Activated T-helper 2 cell treated with anti-CD3 and anti-CD28 coated beads, Interferon-gamma antibody, Interleukin-2, Interleukin-4, amounts not matched to agents 10 μg/mL and 5 μg/mL and 100 μg/mL, durations not matched to agents 14 hours and 24 hours and 36 hours (primary cell): ENCODE measurements at regions of chr6 and their contacts with region 1.

Region 1: DNA sequence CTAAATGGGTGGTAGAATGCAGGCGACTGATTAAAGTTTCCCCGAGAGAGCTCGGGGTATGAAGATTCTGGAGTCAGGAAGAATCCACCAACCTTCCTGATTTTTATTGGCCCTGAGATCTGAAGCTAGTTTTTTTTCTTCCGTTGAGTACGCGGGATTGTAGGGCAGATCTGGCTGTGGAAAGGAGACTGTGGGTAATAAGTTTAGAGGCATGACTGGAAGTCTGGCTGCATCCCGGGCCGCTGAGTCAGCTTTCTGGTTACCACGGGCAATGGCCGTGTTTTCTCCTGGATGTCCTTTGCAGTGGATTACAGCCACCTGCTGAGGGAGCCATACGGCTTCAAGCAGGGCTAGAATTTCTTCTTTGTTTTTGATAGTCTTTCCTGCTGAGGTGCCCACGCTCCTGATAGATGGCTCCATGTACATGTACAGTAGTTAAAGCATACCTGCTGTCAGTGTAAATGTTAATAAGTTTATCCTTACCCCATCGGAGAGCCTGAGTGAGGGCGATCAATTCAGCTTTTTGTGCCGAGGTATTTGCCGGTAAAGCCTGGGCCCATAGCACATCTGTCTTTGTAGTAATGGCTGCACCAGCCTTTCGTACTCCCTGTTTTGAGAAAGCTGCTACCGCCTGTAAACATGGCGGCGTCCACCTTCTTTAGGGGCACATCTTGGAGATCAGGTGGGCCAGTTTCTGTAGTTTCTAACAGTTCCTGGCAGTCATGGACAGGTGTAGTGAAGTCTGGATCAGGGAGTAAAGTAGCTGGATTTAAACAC is 154.0 kb downstream of the TRIM27 start:
- DNase-seq: no peak
- H3K4me3 Mint-ChIP-seq: no peak overlapping the region
- H3K27ac Mint-ChIP-seq: no peak overlapping the region
- H3K4me1 Mint-ChIP-seq: peaks cover 5% of the 10 kb centered on the region
- H3K27me3 Mint-ChIP-seq: peaks cover 92% of the 10 kb centered on the region

Region 2: DNA sequence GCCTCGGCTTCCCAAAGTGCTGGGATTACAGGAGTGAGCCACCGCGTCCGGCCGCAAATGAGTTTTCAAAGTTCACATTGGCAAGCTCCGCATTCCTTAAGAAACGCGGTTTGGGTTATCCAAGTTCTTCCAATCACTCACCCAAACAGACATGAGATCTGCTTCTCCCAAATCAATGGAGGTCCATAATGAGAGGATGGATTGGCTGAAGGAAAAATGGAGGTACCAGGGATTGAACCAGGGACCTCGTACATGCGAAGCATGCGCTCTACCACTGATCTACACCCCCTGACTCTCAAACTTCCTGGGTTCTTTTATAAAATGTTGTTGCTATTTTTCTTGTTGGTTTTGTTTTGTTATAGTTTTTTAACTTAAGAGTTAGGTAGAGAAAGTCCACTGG is 74.1 kb before region 1 on chr6:
- intact Hi-C with region 1: loop called (anchors 10 kb)
- DNase-seq: no peak
- H3K4me3 Mint-ChIP-seq: no peak overlapping the region
- H3K27ac Mint-ChIP-seq: no peak overlapping the region
- H3K4me1 Mint-ChIP-seq: peaks cover 7% of the 10 kb centered on the region
- H3K27me3 Mint-ChIP-seq: peaks cover 84% of the 10 kb centered on the region